ENCODE measurements at regions of chr15 and their contacts with region 1.

Region 1: DNA sequence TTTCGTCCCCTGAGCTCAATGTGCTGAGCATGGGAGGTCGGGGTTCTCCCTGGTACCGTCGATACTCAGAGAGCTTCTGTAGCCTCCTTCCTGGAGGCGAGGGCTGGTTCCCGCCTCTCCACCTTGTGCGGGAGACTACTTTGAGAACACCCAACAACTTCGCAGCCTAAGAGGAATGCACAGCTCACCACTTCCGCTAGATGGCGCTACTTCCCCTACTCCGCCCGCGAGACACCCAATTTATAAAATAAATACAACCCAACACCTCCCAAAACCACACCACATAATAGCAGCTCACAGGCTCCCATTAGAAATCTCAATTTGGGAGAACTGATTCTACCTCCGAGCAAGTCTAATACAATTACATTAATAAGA is 1.2 kb downstream of the RGMA start:
- DNase-seq: peak; percentile 83
- CTCF ChIP-seq: peak; percentile 77

Region 2: DNA sequence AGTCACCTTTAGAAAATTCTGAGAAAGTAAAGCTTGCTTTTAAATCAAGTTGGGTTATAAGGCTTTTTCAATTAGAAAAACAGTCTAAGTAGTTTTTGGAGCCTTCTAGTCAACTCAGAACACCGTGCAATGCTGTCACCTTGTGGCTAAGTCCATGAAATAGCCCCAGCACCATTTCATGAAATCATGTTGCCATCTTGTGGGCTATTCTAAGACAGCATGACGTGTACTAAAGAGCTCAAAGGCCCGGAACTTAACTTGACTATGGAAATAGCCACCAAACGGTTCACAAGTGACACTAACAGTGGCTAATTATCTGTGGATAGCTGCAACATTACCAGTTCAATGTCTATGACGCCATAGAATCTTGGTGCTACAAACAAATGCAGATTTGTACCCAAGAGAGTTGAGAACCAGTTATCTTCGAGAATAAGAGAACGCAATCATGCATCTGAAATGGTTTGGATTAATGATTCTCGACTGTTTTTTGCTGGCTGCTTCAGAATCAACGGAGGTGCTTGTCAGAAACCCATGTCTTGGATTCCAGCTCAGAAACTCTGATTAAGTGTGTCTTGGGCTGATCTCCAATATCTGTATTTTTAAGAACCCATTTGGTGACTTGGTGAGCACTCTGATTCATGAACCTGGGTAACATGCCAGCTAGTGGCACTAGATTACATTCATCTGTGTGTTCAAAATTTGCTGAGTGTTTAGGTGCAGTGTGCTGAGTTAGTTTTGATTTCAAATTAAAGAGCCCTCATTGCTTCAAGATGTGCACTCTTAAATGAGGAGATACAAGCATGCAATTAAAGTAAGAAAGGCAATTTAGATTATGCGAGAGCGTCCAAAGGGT is 1032.3 kb after region 1 on chr15:
- in situ Hi-C with region 1: loop called (anchors 25 kb)
- DNase-seq: peak; percentile 58
- CTCF ChIP-seq: peak; percentile 79